ENCODE measurements at regions of chr20 and their contacts with region 1.

Region 1: GRCh38 chr20:57964011-57964862 is 254.4 kb upstream of the PMEPA1 start:
- DNase-seq: peak in 1 of 2 donors; percentile 71
- H3K4me3 ChIP-seq: peak overlapping the region in 1 of 2 donors; percentile 23
- H3K27ac ChIP-seq: peak overlapping the region; percentile 86 to 87
- H3K4me1 ChIP-seq: peaks cover 2 to 38% of the 10 kb centered on the region in 2 donors
- H3K27me3 ChIP-seq: no peaks in the 10 kb centered on the region
- CTCF ChIP-seq: no peak

Region 2: DNA sequence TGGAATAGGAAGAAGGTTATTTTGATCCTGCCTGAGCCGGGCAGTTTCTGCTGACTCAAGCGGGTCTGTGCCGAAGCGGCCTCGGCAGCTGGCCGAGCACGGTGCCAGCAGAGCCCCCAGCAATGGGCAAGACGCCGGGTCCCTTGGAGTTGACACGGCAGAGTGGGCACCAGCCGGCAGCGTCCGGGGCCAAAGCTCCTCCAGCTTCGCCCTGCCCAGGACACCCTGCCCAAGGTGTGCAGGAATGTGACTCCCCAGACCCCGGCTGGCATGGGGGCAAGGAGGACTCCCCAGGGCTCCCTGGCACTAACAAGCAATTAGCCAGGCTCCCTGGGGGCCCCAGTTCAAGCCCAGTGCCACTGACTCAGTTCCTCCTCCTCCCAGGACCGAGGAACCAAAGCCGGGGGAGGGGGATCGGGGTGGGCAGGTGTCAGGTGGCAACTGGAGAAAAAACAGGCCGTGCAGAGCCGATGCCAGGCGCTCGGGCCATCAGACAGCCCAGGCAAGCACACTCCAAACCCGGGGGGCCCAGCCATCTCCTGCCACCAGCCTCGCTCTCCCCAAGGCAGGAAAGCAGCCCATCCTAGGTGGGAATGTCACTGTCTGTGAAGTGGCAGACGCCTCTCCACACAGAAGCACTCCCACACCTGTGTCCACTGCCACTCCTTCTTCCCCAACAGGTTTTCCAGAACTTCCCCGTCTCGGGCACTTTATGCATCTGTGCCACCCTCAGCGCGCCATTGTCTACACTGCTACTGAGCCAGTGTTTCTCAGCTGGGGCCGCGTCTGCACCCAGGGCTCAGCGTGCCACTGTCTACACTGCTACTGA is 302.8 kb before region 1 on chr20:
- intact Hi-C with region 1: loop called (anchors 10 kb)
- DNase-seq: peak; percentile 10 to 70
- H3K4me3 ChIP-seq: peak overlapping the region; percentile 28 to 36
- H3K27ac ChIP-seq: peak overlapping the region in 1 of 2 donors; percentile 58
- H3K4me1 ChIP-seq: peaks cover 5 to 53% of the 10 kb centered on the region in 2 donors
- H3K27me3 ChIP-seq: no peaks in the 10 kb centered on the region
- CTCF ChIP-seq: no peak

Region 3: DNA sequence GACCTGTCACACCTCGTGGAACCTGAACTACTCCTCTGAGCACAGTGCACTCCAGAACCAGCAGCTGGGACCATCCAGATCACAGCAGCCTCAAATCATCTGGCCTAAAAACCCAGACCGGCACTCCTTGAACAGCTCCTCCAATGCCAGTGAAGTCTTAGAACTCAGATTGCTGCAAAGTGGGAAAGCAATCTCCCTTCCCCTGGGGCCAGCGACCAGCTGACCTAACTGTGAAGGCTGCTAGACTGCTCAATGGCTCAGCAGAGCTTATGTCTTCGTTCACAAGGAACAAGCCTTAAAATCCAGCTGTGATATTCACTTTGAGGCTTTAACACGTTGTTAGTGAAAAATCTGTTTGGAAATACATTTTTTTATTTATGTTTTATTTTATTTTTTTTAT is 21.0 kb after region 1 on chr20:
- intact Hi-C with region 1: no loop called
- DNase-seq: no peak
- H3K4me3 ChIP-seq: no peak overlapping the region
- H3K27ac ChIP-seq: no peak overlapping the region
- H3K4me1 ChIP-seq: no peaks in the 10 kb centered on the region
- H3K27me3 ChIP-seq: no peaks in the 10 kb centered on the region
- CTCF ChIP-seq: no peak